ENCODE measurements at regions of chr9 and their contacts with region 1.

Region 1: DNA sequence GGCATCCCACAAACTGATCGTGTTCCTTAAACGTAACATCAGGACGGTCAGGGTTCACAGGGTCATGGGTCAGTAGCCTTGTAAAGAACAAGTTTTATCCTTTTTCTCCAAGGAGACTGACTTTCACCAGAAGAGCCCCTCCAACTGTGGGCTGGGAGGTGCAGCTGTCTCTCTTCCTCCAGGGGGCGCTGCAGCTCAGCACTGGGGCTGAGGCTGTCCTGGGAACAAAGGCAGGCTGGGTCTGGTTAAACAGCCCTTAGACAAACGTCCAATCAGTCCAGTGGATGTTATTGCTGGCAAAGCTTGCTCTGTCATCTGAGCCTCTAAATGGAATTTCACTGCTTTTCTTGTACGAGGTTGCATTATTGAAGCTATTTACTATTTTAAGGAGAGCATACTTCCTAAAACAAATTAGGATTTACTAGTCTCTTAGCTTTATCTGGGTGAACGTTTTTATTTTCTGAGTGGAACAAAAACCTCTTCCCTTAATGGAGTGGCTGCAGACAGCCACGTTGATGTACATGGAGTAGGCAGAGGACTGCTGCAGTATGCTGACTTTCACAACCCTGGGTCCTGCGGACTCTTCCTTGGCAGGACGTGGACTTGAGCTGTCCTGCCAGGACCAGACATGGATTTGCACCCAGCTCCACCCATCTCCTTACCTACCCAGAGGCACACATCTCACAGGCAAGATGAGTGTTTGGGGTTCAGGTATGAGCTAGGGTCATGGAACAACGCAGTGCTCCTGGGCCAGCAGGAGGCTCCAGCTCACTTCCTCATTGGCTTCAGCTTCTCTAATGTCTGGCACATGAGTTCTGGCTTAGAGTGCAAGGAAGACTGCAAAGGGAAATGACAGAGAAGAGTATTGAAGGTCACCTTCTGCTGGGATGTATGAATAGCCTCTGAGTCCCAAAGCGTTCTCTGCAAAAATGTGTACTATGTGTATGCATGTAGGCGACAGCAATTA is 7.8 kb downstream of the EXOSC2 start:
- DNase-seq: peak; percentile 88
- H3K4me3 ChIP-seq: no peak overlapping the region
- H3K27ac ChIP-seq: no peak overlapping the region
- H3K4me1 ChIP-seq: peaks cover 0 to 32% (median 1%) of the 10 kb centered on the region in 6 donors
- H3K27me3 ChIP-seq: no peaks in the 10 kb centered on the region
- CTCF ChIP-seq: peak; percentile 45 to 92 (median 84)
- POLR2A ChIP-seq: no peak

Region 2: GRCh38 chr9:130138171-130138653 is 563.1 kb before region 1 on chr9:
- intact Hi-C with region 1: no loop called
- DNase-seq: no peak
- H3K4me3 ChIP-seq: no peak overlapping the region
- H3K27ac ChIP-seq: peak overlapping the region in 4 of 8 donors; percentile 36 to 69 (median 60)
- H3K4me1 ChIP-seq: peaks cover 0 to 44% (median 4%) of the 10 kb centered on the region in 6 donors
- H3K27me3 ChIP-seq: peaks cover 0 to 5% (median 0%) of the 10 kb centered on the region in 7 donors
- CTCF ChIP-seq: no peak
- POLR2A ChIP-seq: no peak

Region 3: GRCh38 chr9:130866474-130866965 is 165.2 kb after region 1 on chr9:
- intact Hi-C with region 1: loop called (anchors 5 kb)
- DNase-seq: peak; percentile 73
- H3K4me3 ChIP-seq: no peak overlapping the region
- H3K27ac ChIP-seq: no peak overlapping the region
- H3K4me1 ChIP-seq: peaks cover 0 to 40% (median 17%) of the 10 kb centered on the region in 6 donors
- H3K27me3 ChIP-seq: no peaks in the 10 kb centered on the region
- CTCF ChIP-seq: peak; percentile 61 to 85 (median 80)
- POLR2A ChIP-seq: no peak

Region 4: GRCh38 chr9:130940693-130941576 is 239.6 kb after region 1 on chr9:
- intact Hi-C with region 1: loop called (anchors 10 kb)
- DNase-seq: peak; percentile 90
- H3K4me3 ChIP-seq: peak overlapping the region in 1 of 8 donors; percentile 53
- H3K27ac ChIP-seq: no peak overlapping the region
- H3K4me1 ChIP-seq: peaks cover 15 to 46% (median 36%) of the 10 kb centered on the region in 6 donors
- H3K27me3 ChIP-seq: peaks cover 4 to 82% (median 64%) of the 10 kb centered on the region in 7 donors
- CTCF ChIP-seq: peak; percentile 46 to 90 (median 78)
- POLR2A ChIP-seq: no peak